Left cardiac atrium (tissue), 4 donors: ENCODE measurements at regions of chr9 and their contacts with region 1.

Region 1: GRCh38 chr9:109903515-109904138 is 123.6 kb downstream of the PALM2AKAP2 start:
- DNase-seq: peak; percentile 55
- ATAC-seq: peak; percentile 56 to 58

Region 2: GRCh38 chr9:110058304-110058953 is 154.8 kb after region 1 on chr9:
- intact Hi-C with region 1: loop called in 1 of 2 experiments (anchors 5 kb)
- DNase-seq: no peak
- ATAC-seq: peak; percentile 64 to 78

Region 3: DNA sequence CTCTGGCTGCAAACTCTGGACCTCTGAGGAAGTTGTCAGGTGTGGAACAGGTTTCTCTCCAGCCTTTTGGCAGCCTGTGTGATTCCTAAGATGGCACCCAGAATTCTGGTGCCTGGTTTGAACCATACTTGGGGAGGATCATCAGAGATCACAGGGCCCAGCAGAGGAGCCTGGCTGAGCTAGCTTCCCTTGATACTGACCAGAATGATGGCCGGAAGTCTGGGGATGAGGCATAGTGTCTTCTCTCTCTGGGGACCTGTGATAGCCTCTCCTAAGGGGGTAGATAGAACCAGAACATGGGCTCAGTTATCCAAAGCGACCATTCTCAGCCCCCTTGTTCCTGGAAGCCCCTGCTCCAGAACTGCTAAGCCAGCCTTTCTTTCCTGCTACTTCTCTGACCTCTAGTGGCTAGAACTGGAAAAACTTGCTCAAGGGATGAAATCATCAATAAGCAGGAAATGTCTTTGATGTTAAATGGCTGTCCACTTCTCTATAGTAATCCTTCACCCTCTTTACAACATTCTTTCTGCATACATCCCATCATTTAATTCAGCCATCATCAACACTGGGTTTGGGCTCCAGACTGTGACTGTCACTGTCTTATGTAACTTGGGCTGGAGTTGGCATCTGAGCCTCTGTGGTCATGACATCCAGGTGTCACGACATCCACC is 249.2 kb after region 1 on chr9:
- intact Hi-C with region 1: loop called (anchors 2 to 10 kb)
- DNase-seq: no peak
- ATAC-seq: peak; percentile 20 to 25

Region 4: GRCh38 chr9:110217656-110218099 is 314.1 kb after region 1 on chr9:
- intact Hi-C with region 1: loop called in 1 of 2 experiments (anchors 10 kb)
- DNase-seq: no peak
- ATAC-seq: no peak